Heart left ventricle (tissue), 16 donors: ENCODE measurements at regions of chr11 and their contacts with region 1.

Region 1: GRCh38 chr11:16785520-16786128 is 47.2 kb downstream of the C11orf58 start:
- DNase-seq: peak in 4 of 5 donors; percentile 68 to 75 (median 71)
- ATAC-seq: peak; percentile 33 to 77 (median 72)
- H3K4me3 ChIP-seq: no peak overlapping the region
- H3K27ac ChIP-seq: peak overlapping the region in 5 of 12 donors; percentile 28 to 68 (median 46)
- H3K4me1 ChIP-seq: peaks cover 0 to 71% (median 35%) of the 10 kb centered on the region in 12 donors
- H3K27me3 ChIP-seq: no peaks in the 10 kb centered on the region
- CTCF ChIP-seq: peak; percentile 80 to 97 (median 88)
- POLR2A ChIP-seq: no peak

Region 2: GRCh38 chr11:16561150-16561549 is 224.5 kb before region 1 on chr11:
- intact Hi-C with region 1: no loop called
- DNase-seq: no peak
- ATAC-seq: no peak
- H3K4me3 ChIP-seq: no peak overlapping the region
- H3K27ac ChIP-seq: no peak overlapping the region
- H3K4me1 ChIP-seq: peaks cover 0 to 17% (median 4%) of the 10 kb centered on the region in 12 donors
- H3K27me3 ChIP-seq: no peaks in the 10 kb centered on the region
- CTCF ChIP-seq: no peak
- POLR2A ChIP-seq: no peak

Region 3: GRCh38 chr11:16727806-16728205 is 57.8 kb before region 1 on chr11:
- intact Hi-C with region 1: no loop called
- DNase-seq: no peak
- ATAC-seq: no peak
- H3K4me3 ChIP-seq: no peak overlapping the region
- H3K27ac ChIP-seq: no peak overlapping the region
- H3K4me1 ChIP-seq: no peaks in the 10 kb centered on the region
- H3K27me3 ChIP-seq: no peaks in the 10 kb centered on the region
- CTCF ChIP-seq: no peak
- POLR2A ChIP-seq: no peak

Region 4: DNA sequence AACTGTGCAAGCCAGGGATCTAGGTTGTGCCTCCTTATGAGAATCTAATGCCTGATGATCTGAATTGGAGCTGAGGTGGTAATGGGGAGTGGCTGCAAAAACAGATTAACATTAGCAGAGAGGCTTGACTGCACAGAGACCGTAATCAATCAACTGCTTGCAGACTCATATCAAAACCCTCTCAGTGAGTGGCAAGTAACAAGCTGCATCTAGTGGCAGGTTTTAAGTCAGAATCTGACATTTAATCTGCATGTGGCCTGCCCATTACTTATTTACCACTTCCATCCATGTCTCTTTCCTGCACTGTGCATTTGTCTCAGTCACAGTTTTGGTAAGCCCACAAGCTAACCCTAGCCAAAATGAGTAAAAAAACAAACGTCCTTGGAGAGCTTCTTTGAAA is 36.0 kb before region 1 on chr11:
- intact Hi-C with region 1: no loop called
- DNase-seq: no peak
- ATAC-seq: no peak
- H3K4me3 ChIP-seq: no peak overlapping the region
- H3K27ac ChIP-seq: no peak overlapping the region
- H3K4me1 ChIP-seq: peaks cover 0 to 30% (median 20%) of the 10 kb centered on the region in 12 donors
- H3K27me3 ChIP-seq: no peaks in the 10 kb centered on the region
- CTCF ChIP-seq: no peak
- POLR2A ChIP-seq: no peak

Region 5: GRCh38 chr11:16881074-16881709 is 95.6 kb after region 1 on chr11:
- intact Hi-C with region 1: loop called in 8 of 10 experiments (anchors 1 to 10 kb)
- DNase-seq: peak; percentile 67 to 84 (median 72)
- ATAC-seq: peak; percentile 84 to 93 (median 90)
- H3K4me3 ChIP-seq: peak overlapping the region in 8 of 12 donors; percentile 2 to 39 (median 26)
- H3K27ac ChIP-seq: peak overlapping the region in 9 of 12 donors; percentile 17 to 74 (median 66)
- H3K4me1 ChIP-seq: peaks cover 0 to 71% (median 30%) of the 10 kb centered on the region in 12 donors
- H3K27me3 ChIP-seq: no peaks in the 10 kb centered on the region
- CTCF ChIP-seq: peak in 11 of 12 donors; percentile 22 to 68 (median 48)
- POLR2A ChIP-seq: no peak

Region 6: GRCh38 chr11:16935518-16936302 is 150.1 kb after region 1 on chr11:
- intact Hi-C with region 1: loop called in 4 of 10 experiments (anchors 5 kb)
- DNase-seq: peak in 1 of 5 donors; percentile 31
- ATAC-seq: peak in 3 of 4 donors; percentile 16 to 69 (median 40)
- H3K4me3 ChIP-seq: no peak overlapping the region
- H3K27ac ChIP-seq: peak overlapping the region in 11 of 12 donors; percentile 30 to 87 (median 64)
- H3K4me1 ChIP-seq: peaks cover 0 to 43% (median 20%) of the 10 kb centered on the region in 12 donors
- H3K27me3 ChIP-seq: no peaks in the 10 kb centered on the region
- CTCF ChIP-seq: peak; percentile 41 to 74 (median 56)
- POLR2A ChIP-seq: no peak

Region 7: GRCh38 chr11:17063171-17064002 is 277.8 kb after region 1 on chr11:
- intact Hi-C with region 1: loop called (anchors 1 to 5 kb)
- DNase-seq: peak; percentile 57 to 79 (median 68)
- ATAC-seq: peak; percentile 55 to 96 (median 94)
- H3K4me3 ChIP-seq: no peak overlapping the region
- H3K27ac ChIP-seq: no peak overlapping the region
- H3K4me1 ChIP-seq: no peaks in the 10 kb centered on the region
- H3K27me3 ChIP-seq: no peaks in the 10 kb centered on the region
- CTCF ChIP-seq: peak; percentile 59 to 89 (median 76)
- POLR2A ChIP-seq: no peak

Region 8: DNA sequence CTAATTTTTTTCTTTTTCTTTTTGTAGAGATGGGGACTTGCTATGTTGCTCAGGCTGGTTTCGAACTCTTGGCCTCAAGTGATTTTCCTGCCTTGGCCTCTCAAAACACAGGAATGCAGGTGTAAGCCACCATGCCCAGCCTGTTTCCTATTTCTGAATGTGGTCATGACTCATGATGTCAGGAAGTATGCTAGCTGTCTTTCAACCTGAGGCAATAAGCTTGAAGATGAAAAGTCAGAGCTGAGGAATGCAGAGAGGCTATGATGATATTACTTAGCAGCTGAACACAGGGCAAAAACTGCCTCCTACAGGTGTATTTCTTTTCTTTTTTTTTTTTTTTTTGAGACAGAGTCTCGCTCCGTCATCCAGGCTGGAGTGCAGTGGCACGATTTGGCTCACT is 481.9 kb after region 1 on chr11:
- intact Hi-C with region 1: no loop called
- DNase-seq: no peak
- ATAC-seq: no peak
- H3K4me3 ChIP-seq: no peak overlapping the region
- H3K27ac ChIP-seq: no peak overlapping the region
- H3K4me1 ChIP-seq: peaks cover 0 to 6% (median 0%) of the 10 kb centered on the region in 12 donors
- H3K27me3 ChIP-seq: no peaks in the 10 kb centered on the region
- CTCF ChIP-seq: no peak
- POLR2A ChIP-seq: no peak